Activated CD4-positive, alpha-beta T cell treated with anti-CD3 and anti-CD28 coated beads, Interleukin-2, amount 10 ng/mL, durations not matched to agents 24 days and 14 days (primary cell): ENCODE measurements at regions of chrX and their contacts with region 1.

Region 1: DNA sequence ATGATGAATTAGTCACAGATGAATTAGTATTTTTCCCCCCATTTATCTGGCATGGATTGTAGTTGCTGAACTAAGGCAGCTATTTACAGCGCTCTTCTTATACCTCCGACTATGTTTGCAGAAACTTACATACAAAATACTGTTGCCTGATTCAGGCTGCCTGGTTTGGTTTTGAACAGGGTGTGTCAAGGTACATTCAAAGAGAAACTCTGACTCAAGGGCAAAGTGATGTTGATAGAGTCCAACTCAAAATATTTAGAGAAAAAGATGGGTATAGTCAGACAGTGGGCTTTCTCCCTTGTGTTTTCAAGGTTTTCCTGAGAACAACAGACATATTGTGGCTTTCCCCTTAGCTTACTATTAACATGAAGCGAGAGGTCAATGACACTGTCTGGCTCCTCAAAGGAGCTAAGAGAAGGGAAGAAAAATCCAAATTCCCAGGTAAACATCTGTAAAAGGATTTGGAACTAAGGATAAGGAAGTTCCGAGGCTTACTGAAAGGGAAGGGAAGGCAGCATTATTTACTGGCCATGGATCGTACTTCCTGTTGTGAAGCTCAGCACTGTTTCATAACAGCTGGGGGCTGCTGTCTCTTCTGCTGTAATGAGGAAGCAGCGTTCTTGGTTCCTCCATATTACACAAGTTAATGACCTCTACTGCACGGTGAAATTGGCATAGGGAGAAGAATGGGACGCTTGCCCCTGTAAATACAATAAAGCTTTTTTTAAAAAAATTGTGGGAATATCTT is 30.9 kb downstream of the FAM9C start:
- DNase-seq: peak; percentile 69
- H3K4me3 Mint-ChIP-seq: peak overlapping the region; percentile 51
- H3K27ac Mint-ChIP-seq: peak overlapping the region; percentile 89
- H3K4me1 Mint-ChIP-seq: peaks cover 49% of the 10 kb centered on the region
- H3K27me3 Mint-ChIP-seq: no peaks in the 10 kb centered on the region

Region 2: GRCh38 chrX:13026877-13027652 is 13.5 kb after region 1 on chrX:
- intact Hi-C with region 1: loop called (anchors 2 kb)
- DNase-seq: peak; percentile 44
- H3K4me3 Mint-ChIP-seq: peak overlapping the region; percentile 10
- H3K27ac Mint-ChIP-seq: peak overlapping the region; percentile 80
- H3K4me1 Mint-ChIP-seq: peaks cover 60% of the 10 kb centered on the region
- H3K27me3 Mint-ChIP-seq: no peaks in the 10 kb centered on the region

Region 3: DNA sequence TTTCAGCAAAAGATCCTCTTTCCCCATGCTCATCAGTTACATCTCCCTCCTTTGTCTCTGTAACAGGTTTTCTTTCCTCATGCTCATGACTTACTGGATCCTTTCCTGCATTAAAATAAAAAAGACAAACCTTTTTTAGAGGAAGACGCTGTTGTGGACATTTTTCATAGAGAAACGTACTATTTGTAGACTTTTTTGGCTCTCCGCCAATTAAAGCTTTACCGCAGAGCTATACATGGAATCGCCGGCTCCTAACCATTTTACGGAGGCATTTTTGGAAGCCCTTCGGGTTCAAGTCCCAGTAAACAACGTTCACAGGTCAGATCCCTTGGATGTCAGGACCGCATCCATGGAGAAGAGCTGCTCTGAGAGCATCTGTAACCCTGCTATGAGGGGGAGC is 29.6 kb after region 1 on chrX:
- intact Hi-C with region 1: no loop called
- DNase-seq: peak; percentile 6
- H3K4me3 Mint-ChIP-seq: no peak overlapping the region
- H3K27ac Mint-ChIP-seq: no peak overlapping the region
- H3K4me1 Mint-ChIP-seq: peaks cover 9% of the 10 kb centered on the region
- H3K27me3 Mint-ChIP-seq: no peaks in the 10 kb centered on the region

Region 4: DNA sequence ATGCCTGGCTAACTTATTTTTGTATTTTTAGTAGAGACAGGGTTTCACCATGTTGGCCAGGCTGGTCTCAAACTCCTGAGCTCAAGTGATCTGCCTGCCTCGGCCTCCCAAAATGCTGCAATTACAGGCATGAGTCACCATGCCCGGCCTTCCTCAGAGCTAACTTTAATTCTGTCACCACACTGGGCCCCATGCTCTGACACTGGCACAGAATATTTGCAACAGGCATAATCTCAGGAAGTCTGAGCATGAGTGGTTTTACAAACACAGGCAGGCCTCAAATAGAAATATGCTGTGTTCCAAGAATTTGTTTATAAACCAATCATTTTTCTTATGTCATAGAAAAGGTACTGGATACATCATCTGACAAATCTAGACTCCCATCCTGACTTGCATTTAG is 63.6 kb after region 1 on chrX:
- intact Hi-C with region 1: loop called (anchors 1 kb)
- DNase-seq: peak; percentile 71
- H3K4me3 Mint-ChIP-seq: no peak overlapping the region
- H3K27ac Mint-ChIP-seq: peak overlapping the region; percentile 88
- H3K4me1 Mint-ChIP-seq: peaks cover 60% of the 10 kb centered on the region
- H3K27me3 Mint-ChIP-seq: no peaks in the 10 kb centered on the region

Region 5: GRCh38 chrX:13487731-13488523 is 474.4 kb after region 1 on chrX:
- intact Hi-C with region 1: no loop called
- DNase-seq: peak; percentile 85
- H3K4me3 Mint-ChIP-seq: no peak overlapping the region
- H3K27ac Mint-ChIP-seq: peak overlapping the region; percentile 81
- H3K4me1 Mint-ChIP-seq: peaks cover 20% of the 10 kb centered on the region
- H3K27me3 Mint-ChIP-seq: no peaks in the 10 kb centered on the region